PC-9 (cell line): ENCODE measurements at regions of chr4 and their contacts with region 1.

Region 1: GRCh38 chr4:1899149-1900086 is 28.2 kb downstream of the NSD2 start:
- DNase-seq: peak; percentile 51 to 54
- H3K4me3 ChIP-seq: no peak overlapping the region
- H3K27ac ChIP-seq: no peak overlapping the region
- H3K4me1 ChIP-seq: no peaks in the 10 kb centered on the region
- H3K27me3 ChIP-seq: no peaks in the 10 kb centered on the region
- CTCF ChIP-seq: peak; percentile 93

Region 2: DNA sequence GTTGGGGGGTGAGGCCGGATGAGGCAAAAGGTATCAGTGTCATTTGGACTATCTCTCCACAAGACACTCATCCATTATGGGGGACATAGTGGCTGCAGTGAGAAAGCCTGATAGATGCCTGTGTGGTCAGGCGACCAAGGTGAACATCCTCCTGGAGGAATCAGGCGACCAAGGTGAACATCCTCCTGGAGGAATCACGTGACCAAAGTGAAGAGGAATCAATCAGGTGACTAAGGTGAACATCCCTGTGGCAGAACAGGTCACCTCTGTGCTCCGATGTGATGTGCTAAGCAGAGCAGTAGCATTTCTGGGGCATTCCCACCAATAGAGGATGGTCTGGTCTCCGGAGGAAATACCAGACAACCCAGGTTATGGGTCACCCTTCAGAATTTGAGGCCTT is 830.0 kb before region 1 on chr4:
- CTCF ChIA-PET with region 1: interaction called, 20 read pairs
- POLR2A ChIA-PET with region 1: no interaction called
- intact Hi-C with region 1: no loop called
- DNase-seq: no peak
- H3K4me3 ChIP-seq: no peak overlapping the region
- H3K27ac ChIP-seq: no peak overlapping the region
- H3K4me1 ChIP-seq: no peaks in the 10 kb centered on the region
- H3K27me3 ChIP-seq: peaks cover 6% of the 10 kb centered on the region
- CTCF ChIP-seq: no peak

Region 3: DNA sequence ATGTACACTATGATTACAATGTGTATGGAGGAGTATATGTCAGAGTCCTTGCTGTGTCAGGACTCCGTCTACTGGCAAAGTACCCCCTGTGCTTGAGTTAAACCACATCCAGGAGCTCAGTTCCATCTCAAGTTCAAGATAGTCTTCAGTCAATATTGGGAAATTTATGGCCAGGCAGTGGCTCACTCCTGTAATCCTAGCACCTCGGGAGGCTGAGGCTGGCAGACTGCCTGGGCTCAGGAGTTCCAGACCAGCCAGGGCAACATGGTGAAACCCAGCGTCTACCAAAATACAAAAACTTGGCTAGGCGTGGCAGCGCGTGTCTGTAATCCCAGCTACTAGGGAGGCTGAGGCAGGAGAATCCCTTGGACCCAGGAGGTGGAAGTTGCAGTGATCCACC is 193.1 kb before region 1 on chr4:
- CTCF ChIA-PET with region 1: no interaction called
- POLR2A ChIA-PET with region 1: no interaction called
- intact Hi-C with region 1: no loop called
- DNase-seq: no peak
- H3K4me3 ChIP-seq: no peak overlapping the region
- H3K27ac ChIP-seq: no peak overlapping the region
- H3K4me1 ChIP-seq: peaks cover 11% of the 10 kb centered on the region
- H3K27me3 ChIP-seq: no peaks in the 10 kb centered on the region
- CTCF ChIP-seq: no peak

Region 4: GRCh38 chr4:1721004-1721665 is 178.3 kb before region 1 on chr4 and contains the starts of genes TACC3 and TMEM129:
- CTCF ChIA-PET with region 1: no interaction called
- POLR2A ChIA-PET with region 1: no interaction called
- intact Hi-C with region 1: loop called (anchors 10 kb)
- DNase-seq: peak; percentile 95 to 97
- H3K4me3 ChIP-seq: peak within 1 kb of the TSS; percentile 93
- H3K27ac ChIP-seq: peak within 1 kb of the TSS; percentile 48
- H3K4me1 ChIP-seq: peaks cover 33% of the 10 kb centered on the region
- H3K27me3 ChIP-seq: no peaks in the 10 kb centered on the region
- CTCF ChIP-seq: no peak
- total RNA-seq, gene TACC3: 134 TPM in 2 replicates
- total RNA-seq, gene TMEM129: 41.2 and 52.5 TPM in 2 replicates

Region 5: DNA sequence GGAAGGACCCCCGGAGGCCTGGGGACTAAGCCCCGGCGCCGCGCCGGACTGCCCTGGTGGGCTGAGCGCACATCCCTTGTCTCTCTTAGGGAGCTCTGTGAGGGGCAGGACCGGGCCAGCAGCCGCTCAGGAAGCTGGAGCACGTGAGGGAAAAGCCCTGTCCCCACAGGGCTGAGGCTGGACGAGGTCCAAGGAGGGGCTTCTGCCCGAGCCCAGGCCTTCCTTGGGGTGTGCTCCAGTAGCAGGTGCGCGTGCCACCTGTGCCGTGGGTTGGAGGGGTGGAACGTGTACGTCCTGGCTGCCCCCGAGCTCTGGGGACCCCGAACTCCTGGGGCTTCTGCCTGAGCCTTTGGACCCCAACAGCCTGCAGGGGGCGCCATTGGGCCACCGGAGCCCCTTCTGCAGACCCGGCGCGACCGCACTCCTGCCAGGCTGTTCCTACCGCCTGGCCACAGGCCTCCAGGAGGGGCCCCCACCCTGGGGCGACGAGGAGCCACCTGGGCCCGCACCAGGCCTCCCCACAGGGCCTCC is 150.9 kb before region 1 on chr4:
- CTCF ChIA-PET with region 1: interaction called, 4 read pairs
- POLR2A ChIA-PET with region 1: no interaction called
- intact Hi-C with region 1: loop called (anchors 2 kb)
- DNase-seq: peak in 1 of 2 experiments; percentile 84
- H3K4me3 ChIP-seq: no peak overlapping the region
- H3K27ac ChIP-seq: no peak overlapping the region
- H3K4me1 ChIP-seq: no peaks in the 10 kb centered on the region
- H3K27me3 ChIP-seq: no peaks in the 10 kb centered on the region
- CTCF ChIP-seq: peak; percentile 93

Region 6: DNA sequence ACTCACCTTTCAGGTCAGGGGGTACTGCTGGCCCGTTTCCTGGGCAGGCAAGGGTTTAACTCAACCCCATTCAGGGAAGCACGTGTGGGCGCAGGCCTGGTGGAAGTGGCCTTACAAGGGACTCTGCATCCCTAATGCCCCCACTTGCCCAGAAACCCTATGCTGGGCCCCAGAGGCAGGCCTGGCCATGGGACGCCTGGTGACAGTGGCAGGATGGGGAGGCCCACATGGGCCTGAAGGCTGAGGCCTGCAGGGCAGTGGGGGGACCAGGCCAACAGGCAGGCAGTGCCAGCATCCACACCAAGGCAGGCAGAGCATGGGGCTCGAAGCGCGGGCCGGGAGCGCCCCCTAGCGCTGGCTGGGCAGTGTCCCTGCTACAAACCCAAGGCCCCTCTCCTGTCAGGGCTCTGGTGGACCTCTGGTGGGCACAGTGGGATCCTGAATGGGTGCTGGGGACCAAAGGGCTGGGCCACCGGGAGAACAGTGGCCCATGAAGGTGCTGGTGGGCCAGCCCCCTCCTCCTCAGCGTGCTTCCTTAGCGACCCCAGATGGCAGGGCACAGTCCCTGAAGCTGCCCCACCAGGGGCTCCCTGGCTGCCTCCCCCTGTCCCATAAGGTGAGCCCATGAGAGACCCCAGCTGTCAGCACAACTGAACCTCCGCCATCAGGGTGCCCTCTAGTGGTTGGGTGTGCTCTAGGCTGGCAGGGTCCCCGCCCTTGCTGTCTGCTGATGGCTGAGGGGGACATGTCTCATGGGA is 89.5 kb before region 1 on chr4:
- CTCF ChIA-PET with region 1: no interaction called
- POLR2A ChIA-PET with region 1: no interaction called
- intact Hi-C with region 1: loop called (anchors 2 kb)
- DNase-seq: peak; percentile 57 to 84
- H3K4me3 ChIP-seq: no peak overlapping the region
- H3K27ac ChIP-seq: no peak overlapping the region
- H3K4me1 ChIP-seq: no peaks in the 10 kb centered on the region
- H3K27me3 ChIP-seq: no peaks in the 10 kb centered on the region
- CTCF ChIP-seq: peak; percentile 96

Region 7: GRCh38 chr4:1910643-1911042 is 11.2 kb after region 1 on chr4:
- CTCF ChIA-PET with region 1: interaction called, 19 read pairs
- POLR2A ChIA-PET with region 1: no interaction called
- intact Hi-C with region 1: no loop called
- DNase-seq: peak in 1 of 2 experiments; percentile 32
- H3K4me3 ChIP-seq: no peak overlapping the region
- H3K27ac ChIP-seq: no peak overlapping the region
- H3K4me1 ChIP-seq: no peaks in the 10 kb centered on the region
- H3K27me3 ChIP-seq: no peaks in the 10 kb centered on the region
- CTCF ChIP-seq: peak; percentile 68

Region 8: GRCh38 chr4:2080429-2081300 is 181.2 kb after region 1 on chr4:
- CTCF ChIA-PET with region 1: no interaction called
- POLR2A ChIA-PET with region 1: no interaction called
- intact Hi-C with region 1: no loop called
- DNase-seq: no peak
- H3K4me3 ChIP-seq: no peak overlapping the region
- H3K27ac ChIP-seq: no peak overlapping the region
- H3K4me1 ChIP-seq: no peaks in the 10 kb centered on the region
- H3K27me3 ChIP-seq: no peaks in the 10 kb centered on the region
- CTCF ChIP-seq: no peak

Region 9: GRCh38 chr4:2393353-2394270 is 494.2 kb after region 1 on chr4:
- CTCF ChIA-PET with region 1: no interaction called
- POLR2A ChIA-PET with region 1: no interaction called
- intact Hi-C with region 1: no loop called
- DNase-seq: peak in 1 of 2 experiments; percentile 68
- H3K4me3 ChIP-seq: no peak overlapping the region
- H3K27ac ChIP-seq: no peak overlapping the region
- H3K4me1 ChIP-seq: no peaks in the 10 kb centered on the region
- H3K27me3 ChIP-seq: no peaks in the 10 kb centered on the region
- CTCF ChIP-seq: no peak